IMR-90 (cell line): ENCODE measurements at regions of chr1 and their contacts with region 1.

Region 1: GRCh38 chr1:42541104-42541503 is 78.0 kb downstream of the CCDC30 start:
- DNase-seq: no peak
- ATAC-seq: no peak
- H3K4me3 ChIP-seq: no peak overlapping the region
- H3K27ac ChIP-seq: no peak overlapping the region
- H3K4me1 ChIP-seq: no peaks in the 10 kb centered on the region
- H3K27me3 ChIP-seq: no peaks in the 10 kb centered on the region
- CTCF ChIP-seq: no peak
- POLR2A ChIP-seq: no peak
- RAD21 ChIP-seq: no peak

Region 2: DNA sequence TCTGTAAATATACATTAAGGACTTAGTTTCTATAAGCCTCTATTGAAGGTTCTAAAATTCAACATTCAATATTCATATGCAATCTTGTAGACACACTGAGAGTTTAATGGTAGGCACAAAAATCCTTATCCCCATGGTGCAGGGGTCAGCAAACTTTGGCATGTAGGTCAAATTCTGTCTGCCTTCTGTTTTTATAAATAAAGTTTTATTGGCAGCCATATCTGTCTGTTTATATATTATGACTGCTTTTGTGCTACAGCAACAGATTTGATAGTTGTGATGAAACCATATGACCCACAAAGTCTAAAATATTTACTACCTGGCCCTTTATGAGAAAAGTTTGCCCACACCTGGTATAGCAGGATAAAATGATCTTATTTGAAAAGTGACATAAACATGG is 25.9 kb after region 1 on chr1:
- CTCF ChIA-PET with region 1: no interaction called
- POLR2A ChIA-PET with region 1: no interaction called
- dilution Hi-C with region 1: no loop called
- in situ Hi-C with region 1: no loop called
- intact Hi-C with region 1: loop called (anchors 1 kb)
- DNase-seq: no peak
- ATAC-seq: no peak
- H3K4me3 ChIP-seq: no peak overlapping the region
- H3K27ac ChIP-seq: no peak overlapping the region
- H3K4me1 ChIP-seq: peaks cover 2% of the 10 kb centered on the region; the same call in 1 of the 2 replicates
- H3K27me3 ChIP-seq: no peaks in the 10 kb centered on the region
- CTCF ChIP-seq: no peak
- POLR2A ChIP-seq: no peak
- RAD21 ChIP-seq: no peak

Region 3: DNA sequence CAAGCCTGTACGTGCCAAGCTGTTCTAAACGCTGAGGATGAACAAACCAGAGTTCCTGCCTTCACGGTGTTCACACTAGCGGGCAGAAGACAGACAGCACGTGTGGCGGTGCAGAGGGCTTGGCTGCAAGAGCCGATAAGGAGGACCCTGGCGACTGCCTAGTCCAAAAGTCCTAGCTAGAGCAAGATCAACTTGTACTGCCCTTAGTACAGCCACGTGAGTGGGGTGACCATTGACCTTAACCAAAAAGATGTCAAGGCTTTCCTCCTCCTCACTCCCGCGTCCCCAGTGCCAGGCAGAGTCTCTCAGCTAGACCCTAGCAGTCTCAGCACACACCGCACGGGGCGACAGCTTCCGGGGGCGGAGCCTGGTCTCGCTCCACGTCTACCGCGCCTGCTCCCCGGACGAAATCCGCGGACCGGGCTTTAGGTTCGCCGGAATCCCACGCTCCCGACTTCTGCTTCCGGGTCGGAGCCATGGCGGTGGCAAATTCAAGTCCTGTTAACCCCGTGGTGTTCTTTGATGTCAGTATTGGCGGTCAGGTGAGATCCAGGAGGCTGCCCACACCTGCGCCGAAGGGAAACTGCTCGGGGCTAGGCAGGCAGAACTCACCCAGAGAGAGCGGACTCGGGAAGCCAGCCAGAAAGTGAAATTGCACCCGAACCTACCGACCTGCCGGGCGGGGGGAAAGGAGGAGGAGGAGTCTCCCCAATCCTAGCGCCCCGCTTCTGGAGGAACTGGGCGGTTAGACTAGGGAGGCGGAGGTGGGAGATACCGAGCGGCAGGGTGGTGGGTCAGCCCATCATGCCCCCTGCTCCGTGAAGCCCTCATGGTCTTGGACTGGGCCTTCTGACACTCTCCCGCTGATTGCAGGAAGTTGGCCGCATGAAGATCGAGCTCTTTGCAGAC is 117.1 kb after region 1 on chr1 and contains the start of gene PPIH:
- CTCF ChIA-PET with region 1: no interaction called
- POLR2A ChIA-PET with region 1: no interaction called
- dilution Hi-C with region 1: no loop called
- in situ Hi-C with region 1: no loop called
- intact Hi-C with region 1: no loop called
- DNase-seq: peak; percentile 88
- ATAC-seq: peak; percentile 100
- H3K4me3 ChIP-seq: peak within 1 kb of the TSS; percentile 55
- H3K27ac ChIP-seq: peak within 1 kb of the TSS; percentile 60
- H3K4me1 ChIP-seq: no peaks in the 10 kb centered on the region
- H3K27me3 ChIP-seq: peaks cover 2% of the 10 kb centered on the region; the same call in 1 of the 2 replicates
- CTCF ChIP-seq: peak; percentile 24; the same call in 1 of the 2 replicates
- POLR2A ChIP-seq: peak; percentile 39; the same call in 1 of the 2 replicates
- RAD21 ChIP-seq: 0 out of 2 replicates have a peak, but pooled peaks have one; percentile 2
- total RNA-seq, gene PPIH: 22.4 and 36.1 TPM in 2 replicates

Region 4: DNA sequence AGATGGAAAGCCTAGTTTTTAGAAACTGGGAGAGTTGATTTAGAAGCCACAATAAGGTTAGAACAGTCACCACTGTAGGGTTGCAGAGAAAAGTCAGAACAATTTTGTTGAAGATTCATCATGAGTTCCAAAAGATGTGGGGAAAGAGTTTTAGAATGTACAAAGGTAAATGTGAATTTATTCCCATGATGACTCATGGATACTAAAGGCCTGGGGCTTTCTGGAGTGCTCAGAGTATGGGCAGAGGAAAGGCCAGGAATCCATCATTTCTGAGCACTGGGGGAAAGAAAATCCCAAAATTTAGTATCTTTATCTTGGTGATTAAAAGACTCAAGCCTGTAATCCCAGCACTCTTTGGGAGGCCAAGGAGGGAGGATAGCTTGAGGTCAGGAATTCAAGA is 158.9 kb after region 1 on chr1:
- CTCF ChIA-PET with region 1: no interaction called
- POLR2A ChIA-PET with region 1: no interaction called
- dilution Hi-C with region 1: no loop called
- in situ Hi-C with region 1: no loop called
- intact Hi-C with region 1: no loop called
- DNase-seq: peak; percentile 18
- ATAC-seq: no peak
- H3K4me3 ChIP-seq: no peak overlapping the region
- H3K27ac ChIP-seq: no peak overlapping the region
- H3K4me1 ChIP-seq: no peaks in the 10 kb centered on the region
- H3K27me3 ChIP-seq: no peaks in the 10 kb centered on the region
- CTCF ChIP-seq: no peak
- POLR2A ChIP-seq: no peak
- RAD21 ChIP-seq: no peak